Spleen (tissue), 13 donors: ENCODE measurements at regions of chr12 and their contacts with region 1.

Region 1: DNA sequence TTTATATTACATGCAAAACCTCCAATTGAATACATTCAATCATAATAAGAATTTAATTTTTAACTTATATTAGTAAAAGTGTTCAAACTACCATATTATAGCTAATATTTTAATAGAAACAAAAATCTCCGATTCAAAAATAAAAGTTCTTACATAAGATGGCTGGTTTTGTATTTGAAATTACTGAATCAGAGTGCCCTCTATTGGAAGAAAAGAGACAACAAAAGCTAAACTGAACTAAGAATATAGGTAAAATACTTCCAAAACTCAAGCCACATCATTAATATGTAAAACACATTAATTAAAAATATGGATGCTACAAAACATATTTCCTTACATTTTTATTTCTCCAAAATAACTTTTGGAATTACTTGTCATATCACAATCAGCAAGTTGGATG is 120.3 kb downstream of the GARIN6 start:
- DNase-seq: no peak
- H3K4me3 ChIP-seq: no peak overlapping the region
- H3K27ac ChIP-seq: no peak overlapping the region
- H3K4me1 ChIP-seq: no peaks in the 10 kb centered on the region
- H3K27me3 ChIP-seq: no peaks in the 10 kb centered on the region
- CTCF ChIP-seq: peak in 7 of 11 experiments; percentile 10 to 45 (median 30)
- POLR2A ChIP-seq: no peak

Region 2: GRCh38 chr12:99053616-99054362 is 714.0 kb before region 1 on chr12:
- intact Hi-C with region 1: loop called (anchors 5 kb)
- DNase-seq: no peak
- H3K4me3 ChIP-seq: no peak overlapping the region
- H3K27ac ChIP-seq: no peak overlapping the region
- H3K4me1 ChIP-seq: no peaks in the 10 kb centered on the region
- H3K27me3 ChIP-seq: no peaks in the 10 kb centered on the region
- CTCF ChIP-seq: no peak
- POLR2A ChIP-seq: no peak

Region 3: DNA sequence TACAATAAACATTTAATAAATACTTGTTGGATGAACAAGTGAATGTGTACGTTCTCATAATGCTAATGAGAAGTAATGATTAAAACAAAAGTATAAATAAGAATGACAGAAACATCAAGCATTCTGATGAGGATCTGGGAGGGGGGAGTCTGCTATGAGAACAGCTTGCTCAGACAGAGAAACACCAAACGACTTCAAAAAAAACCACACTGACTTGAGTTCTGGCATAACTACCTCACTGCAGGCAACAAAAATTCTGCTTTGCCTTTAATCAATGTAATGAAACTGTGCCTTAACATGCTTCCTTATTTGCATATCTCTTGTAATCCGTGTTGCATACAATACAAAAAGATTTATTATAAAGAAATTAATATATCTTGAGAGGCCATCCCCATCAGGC is 415.5 kb before region 1 on chr12:
- intact Hi-C with region 1: no loop called
- DNase-seq: no peak
- H3K4me3 ChIP-seq: no peak overlapping the region
- H3K27ac ChIP-seq: no peak overlapping the region
- H3K4me1 ChIP-seq: no peaks in the 10 kb centered on the region
- H3K27me3 ChIP-seq: no peaks in the 10 kb centered on the region
- CTCF ChIP-seq: no peak
- POLR2A ChIP-seq: no peak

Region 4: GRCh38 chr12:99386907-99387306 is 380.9 kb before region 1 on chr12:
- intact Hi-C with region 1: loop called (anchors 10 kb)
- DNase-seq: no peak
- H3K4me3 ChIP-seq: no peak overlapping the region
- H3K27ac ChIP-seq: no peak overlapping the region
- H3K4me1 ChIP-seq: no peaks in the 10 kb centered on the region
- H3K27me3 ChIP-seq: no peaks in the 10 kb centered on the region
- CTCF ChIP-seq: no peak
- POLR2A ChIP-seq: no peak